ENCODE measurements at regions of chr3 and their contacts with region 1.

Region 1: GRCh38 chr3:64484289-64484992 is 203.4 kb downstream of the ADAMTS9 start:
- DNase-seq: peak; percentile 81
- H3K4me3 Mint-ChIP-seq: no peak overlapping the region
- H3K27ac Mint-ChIP-seq: no peak overlapping the region
- H3K4me1 Mint-ChIP-seq: no peaks in the 10 kb centered on the region
- H3K27me3 Mint-ChIP-seq: peaks cover 11% of the 10 kb centered on the region
- CTCF ChIP-seq: peak; percentile 94

Region 2: DNA sequence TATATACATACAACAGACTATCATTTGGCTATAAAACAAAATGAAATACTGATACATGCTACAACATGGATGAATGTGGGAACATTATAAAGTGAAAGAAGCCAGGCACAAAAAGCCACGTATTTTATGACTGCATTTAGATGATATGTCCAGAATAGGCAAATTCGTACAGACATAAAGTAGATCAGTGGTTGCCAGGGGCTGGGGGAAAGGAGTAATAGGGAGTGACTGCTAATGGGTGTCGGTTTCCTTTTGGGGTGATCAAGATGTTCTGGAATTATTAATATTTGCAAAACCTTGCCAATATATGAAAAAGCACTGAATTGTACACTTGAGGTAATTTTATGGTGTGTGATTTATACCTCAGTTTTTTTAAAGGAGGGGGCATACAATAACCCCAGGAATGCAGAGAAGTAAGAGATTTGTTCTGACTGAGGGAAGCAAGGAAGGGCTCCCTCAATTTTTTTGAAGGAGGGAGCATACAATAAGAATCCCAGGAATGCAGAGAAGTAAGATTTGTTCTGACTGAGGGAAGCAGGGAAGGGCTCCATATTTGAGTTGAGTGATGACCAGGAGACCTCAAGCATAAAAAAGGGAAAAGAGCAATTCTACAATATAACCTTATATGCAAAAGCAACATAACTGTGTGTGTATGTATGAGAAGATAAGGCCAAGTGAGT is 467.4 kb before region 1 on chr3:
- CTCF ChIA-PET with region 1: interaction called, 12 read pairs
- POLR2A ChIA-PET with region 1: no interaction called
- intact Hi-C with region 1: no loop called
- DNase-seq: no peak
- H3K4me3 Mint-ChIP-seq: peak overlapping the region; percentile 22
- H3K27ac Mint-ChIP-seq: peak overlapping the region; percentile 81
- H3K4me1 Mint-ChIP-seq: peaks cover 22% of the 10 kb centered on the region
- H3K27me3 Mint-ChIP-seq: no peaks in the 10 kb centered on the region
- CTCF ChIP-seq: no peak

Region 3: DNA sequence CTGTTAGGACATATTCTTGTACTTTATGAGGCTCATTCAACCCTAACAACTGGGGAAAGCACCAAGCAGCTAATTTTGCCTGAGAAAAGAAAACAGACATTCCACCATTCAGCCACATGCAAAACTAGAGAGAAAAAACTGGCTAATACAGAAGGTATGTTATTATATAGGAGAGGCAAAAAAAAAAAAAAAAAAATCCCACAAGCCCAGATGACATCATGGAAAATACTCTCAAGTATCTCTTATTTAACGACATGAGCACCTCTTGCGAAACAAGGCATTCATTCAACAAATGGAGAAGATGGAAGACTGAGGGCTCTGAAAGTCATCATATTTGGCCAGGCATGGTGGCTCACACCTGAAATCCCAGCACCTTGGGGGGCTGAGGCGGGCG is 320.7 kb before region 1 on chr3:
- CTCF ChIA-PET with region 1: interaction called, 13 read pairs
- POLR2A ChIA-PET with region 1: no interaction called
- intact Hi-C with region 1: no loop called
- DNase-seq: peak; percentile 85
- H3K4me3 Mint-ChIP-seq: peak overlapping the region; percentile 25
- H3K27ac Mint-ChIP-seq: peak overlapping the region; percentile 87
- H3K4me1 Mint-ChIP-seq: peaks cover 48% of the 10 kb centered on the region
- H3K27me3 Mint-ChIP-seq: no peaks in the 10 kb centered on the region
- CTCF ChIP-seq: no peak

Region 4: GRCh38 chr3:64329037-64329436 is 155.4 kb before region 1 on chr3:
- CTCF ChIA-PET with region 1: interaction called, 10 read pairs
- POLR2A ChIA-PET with region 1: no interaction called
- intact Hi-C with region 1: no loop called
- DNase-seq: peak; percentile 24
- H3K4me3 Mint-ChIP-seq: no peak overlapping the region
- H3K27ac Mint-ChIP-seq: no peak overlapping the region
- H3K4me1 Mint-ChIP-seq: no peaks in the 10 kb centered on the region
- H3K27me3 Mint-ChIP-seq: no peaks in the 10 kb centered on the region
- CTCF ChIP-seq: no peak

Region 5: GRCh38 chr3:64343689-64344430 is 140.6 kb before region 1 on chr3:
- CTCF ChIA-PET with region 1: no interaction called
- POLR2A ChIA-PET with region 1: no interaction called
- intact Hi-C with region 1: no loop called
- DNase-seq: no peak
- H3K4me3 Mint-ChIP-seq: no peak overlapping the region
- H3K27ac Mint-ChIP-seq: peak overlapping the region; percentile 96
- H3K4me1 Mint-ChIP-seq: peaks cover 45% of the 10 kb centered on the region
- H3K27me3 Mint-ChIP-seq: no peaks in the 10 kb centered on the region
- CTCF ChIP-seq: no peak

Region 6: GRCh38 chr3:64417816-64418215 is 66.6 kb before region 1 on chr3:
- CTCF ChIA-PET with region 1: interaction called, 14 read pairs
- POLR2A ChIA-PET with region 1: no interaction called
- intact Hi-C with region 1: no loop called
- DNase-seq: peak; percentile 10
- H3K4me3 Mint-ChIP-seq: no peak overlapping the region
- H3K27ac Mint-ChIP-seq: no peak overlapping the region
- H3K4me1 Mint-ChIP-seq: no peaks in the 10 kb centered on the region
- H3K27me3 Mint-ChIP-seq: no peaks in the 10 kb centered on the region
- CTCF ChIP-seq: no peak

Region 7: GRCh38 chr3:64467255-64467944 is 17.0 kb before region 1 on chr3:
- CTCF ChIA-PET with region 1: interaction called, 38 read pairs
- POLR2A ChIA-PET with region 1: no interaction called
- intact Hi-C with region 1: no loop called
- DNase-seq: no peak
- H3K4me3 Mint-ChIP-seq: no peak overlapping the region
- H3K27ac Mint-ChIP-seq: no peak overlapping the region
- H3K4me1 Mint-ChIP-seq: no peaks in the 10 kb centered on the region
- H3K27me3 Mint-ChIP-seq: peaks cover 13% of the 10 kb centered on the region
- CTCF ChIP-seq: no peak

Measured in MCF 10A (cell line).